ENCODE measurements at regions of chr5 and their contacts with region 1.

Region 1: DNA sequence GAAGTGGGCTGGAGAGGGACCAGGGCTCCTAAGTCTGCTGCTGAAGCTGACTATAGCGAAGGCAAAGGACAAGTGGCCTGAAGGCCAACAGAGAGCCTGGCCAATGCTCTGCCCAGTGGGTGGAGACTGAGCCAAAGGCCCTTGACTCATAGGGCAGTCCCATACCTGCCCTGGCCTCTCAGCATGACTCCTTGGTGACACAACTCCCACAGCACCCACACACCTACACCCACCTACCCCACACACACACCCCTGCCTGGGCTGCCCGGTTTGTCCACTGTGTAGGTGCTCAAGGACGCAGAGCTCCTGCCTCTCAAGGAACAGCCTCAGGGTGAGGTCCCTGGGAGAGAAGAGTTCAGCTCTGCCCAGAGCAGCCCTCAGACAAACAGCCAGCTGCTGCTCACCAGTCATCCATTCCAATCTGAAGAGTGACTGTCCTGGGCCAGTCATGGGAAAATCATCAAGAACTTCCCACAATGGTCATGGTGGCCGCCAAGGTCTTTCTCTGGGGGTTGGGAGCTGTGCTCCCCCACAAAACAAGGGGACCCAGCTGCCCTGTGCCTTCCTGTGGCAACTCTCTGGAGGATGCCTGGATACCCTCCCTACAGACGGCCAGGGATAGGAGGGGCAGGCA is 5.0 kb downstream of the TNIP1 start:
- DNase-seq: peak; percentile 98 to 99
- H3K4me3 ChIP-seq: peak overlapping the region; percentile 15; the same call in 1 of the 2 replicates
- H3K27ac ChIP-seq: peak overlapping the region; percentile 94
- H3K4me1 ChIP-seq: peaks cover 82% of the 10 kb centered on the region
- H3K27me3 ChIP-seq: no peaks in the 10 kb centered on the region
- CTCF ChIP-seq: no peak

Region 2: DNA sequence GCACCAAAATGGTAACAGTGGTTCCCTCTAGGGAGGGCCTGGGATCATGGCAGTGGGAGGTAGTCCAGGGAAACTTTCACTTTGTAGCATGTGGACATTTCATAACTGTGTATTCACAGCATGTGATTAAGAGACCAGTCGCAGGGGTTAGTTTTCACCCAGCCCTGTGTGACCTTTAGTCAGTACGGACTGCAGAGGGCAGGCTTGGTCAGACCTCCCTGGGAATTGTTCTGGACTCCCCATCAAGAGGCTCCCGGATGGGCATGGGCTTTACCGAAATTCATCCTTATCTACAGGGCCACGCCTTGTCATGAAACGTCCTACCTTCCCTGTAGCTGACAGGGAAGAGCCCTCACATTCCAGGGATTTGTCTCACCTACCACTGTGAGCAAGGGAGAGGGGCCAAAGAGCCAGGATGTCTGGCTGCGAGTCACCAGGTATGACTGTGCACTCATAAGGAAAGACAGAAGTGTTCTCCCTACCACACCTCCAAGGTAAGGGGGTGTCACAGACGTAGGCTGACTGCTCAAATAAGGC is 35.5 kb before region 1 on chr5:
- CTCF ChIA-PET with region 1: no interaction called
- POLR2A ChIA-PET with region 1: no interaction called
- intact Hi-C with region 1: loop called (anchors 1 kb)
- DNase-seq: peak; percentile 63 to 85
- H3K4me3 ChIP-seq: no peak overlapping the region
- H3K27ac ChIP-seq: peak overlapping the region; percentile 89
- H3K4me1 ChIP-seq: peaks cover 47% of the 10 kb centered on the region
- H3K27me3 ChIP-seq: no peaks in the 10 kb centered on the region
- CTCF ChIP-seq: no peak

Region 3: GRCh38 chr5:151051066-151051930 is 24.5 kb before region 1 on chr5:
- CTCF ChIA-PET with region 1: interaction called, 4 read pairs
- POLR2A ChIA-PET with region 1: no interaction called
- intact Hi-C with region 1: loop called (anchors 2 kb)
- DNase-seq: peak; percentile 59 to 65
- H3K4me3 ChIP-seq: no peak overlapping the region
- H3K27ac ChIP-seq: no peak overlapping the region
- H3K4me1 ChIP-seq: peaks cover 25% of the 10 kb centered on the region
- H3K27me3 ChIP-seq: no peaks in the 10 kb centered on the region
- CTCF ChIP-seq: peak; percentile 92

Region 4: DNA sequence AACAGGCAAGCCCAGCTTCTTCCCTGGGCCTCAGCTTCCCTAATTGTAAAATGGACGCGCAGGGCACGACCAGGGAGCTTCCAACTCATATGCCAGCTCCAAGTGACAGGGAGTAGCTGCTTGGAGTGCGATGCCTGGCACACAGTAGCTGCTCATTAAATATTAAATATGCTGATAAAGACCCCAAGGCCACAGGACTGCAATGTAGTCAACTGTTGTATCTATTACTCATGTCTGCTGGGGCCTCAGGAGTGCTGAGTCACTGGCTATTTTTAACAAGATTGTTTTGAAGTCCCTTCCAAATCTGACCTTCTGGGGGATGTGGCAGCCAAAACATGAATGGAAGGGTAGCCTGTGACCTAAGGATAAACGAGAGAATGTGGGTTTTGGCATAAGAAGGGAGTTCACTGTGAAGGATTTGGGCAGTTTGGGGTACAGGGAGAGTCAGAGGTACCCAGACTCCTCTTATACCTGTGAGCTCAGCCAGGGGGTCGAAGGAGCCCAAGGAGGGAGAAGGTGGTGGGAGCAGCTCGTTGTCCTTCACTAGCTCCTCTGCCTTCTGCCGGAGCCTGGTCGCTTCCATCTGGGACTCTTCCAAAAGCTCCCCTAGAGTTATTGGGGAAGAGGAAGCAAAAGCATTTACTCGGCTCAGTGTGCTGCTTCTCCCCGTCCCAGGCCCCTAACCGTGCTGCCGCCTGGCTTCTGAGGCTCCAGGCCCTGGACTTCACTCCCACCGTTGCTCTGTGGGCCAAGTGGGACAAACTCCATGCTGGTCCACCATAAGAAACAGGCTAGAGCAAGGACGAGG is 12.5 kb before region 1 on chr5:
- CTCF ChIA-PET with region 1: interaction called, 3 read pairs
- POLR2A ChIA-PET with region 1: no interaction called
- intact Hi-C with region 1: loop called (anchors 1 kb)
- DNase-seq: peak in 1 of 2 experiments; percentile 55
- H3K4me3 ChIP-seq: no peak overlapping the region
- H3K27ac ChIP-seq: peak overlapping the region; percentile 53
- H3K4me1 ChIP-seq: peaks cover 38% of the 10 kb centered on the region
- H3K27me3 ChIP-seq: no peaks in the 10 kb centered on the region
- CTCF ChIP-seq: no peak

Measured in PC-9 (cell line).